GM23248 (cell line): ENCODE measurements at regions of chrX and their contacts with region 1.

Region 1: DNA sequence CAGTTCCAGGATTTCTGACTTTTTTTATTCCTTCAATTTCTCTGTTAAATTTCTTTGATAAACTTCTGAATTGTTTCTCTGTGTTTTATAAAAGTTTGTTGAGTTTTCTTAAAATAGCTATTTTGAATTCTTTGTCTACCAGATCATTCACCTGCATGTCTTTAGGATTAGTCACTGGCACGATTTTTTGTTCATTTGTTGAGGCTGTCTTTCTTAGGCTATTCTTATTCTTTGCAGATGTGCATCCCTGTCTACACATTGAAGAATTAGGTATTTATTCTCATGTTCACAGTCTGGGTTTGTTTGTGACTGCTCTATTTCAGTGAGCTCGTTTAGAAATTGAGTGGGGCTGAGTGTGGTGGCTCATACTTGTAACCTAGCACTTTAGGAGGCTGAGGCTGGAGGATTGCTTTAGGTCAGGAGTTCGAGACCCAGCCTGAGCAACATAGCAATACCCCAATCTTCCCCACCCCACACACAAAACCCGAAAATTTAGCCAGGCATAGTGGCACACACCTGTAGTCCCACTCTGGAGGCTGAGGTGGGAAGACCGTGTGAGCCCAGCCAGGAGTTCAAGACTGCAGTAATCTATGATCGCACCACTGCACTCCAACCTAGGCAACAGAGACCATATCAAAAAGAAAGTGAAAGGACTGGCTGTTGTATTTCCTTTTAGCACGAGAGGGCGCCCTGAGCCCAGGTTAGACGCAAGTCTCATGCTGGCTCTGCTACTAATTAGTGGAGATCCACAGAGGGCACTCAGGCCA is 42.0 kb downstream of the F8 start:
- DNase-seq: peak; percentile 74
- H3K4me3 ChIP-seq: peak overlapping the region; percentile 73
- H3K27ac ChIP-seq: no peak overlapping the region
- H3K4me1 ChIP-seq: peaks cover 3% of the 10 kb centered on the region; the same call in 1 of the 2 replicates
- H3K27me3 ChIP-seq: no peaks in the 10 kb centered on the region

Region 2: DNA sequence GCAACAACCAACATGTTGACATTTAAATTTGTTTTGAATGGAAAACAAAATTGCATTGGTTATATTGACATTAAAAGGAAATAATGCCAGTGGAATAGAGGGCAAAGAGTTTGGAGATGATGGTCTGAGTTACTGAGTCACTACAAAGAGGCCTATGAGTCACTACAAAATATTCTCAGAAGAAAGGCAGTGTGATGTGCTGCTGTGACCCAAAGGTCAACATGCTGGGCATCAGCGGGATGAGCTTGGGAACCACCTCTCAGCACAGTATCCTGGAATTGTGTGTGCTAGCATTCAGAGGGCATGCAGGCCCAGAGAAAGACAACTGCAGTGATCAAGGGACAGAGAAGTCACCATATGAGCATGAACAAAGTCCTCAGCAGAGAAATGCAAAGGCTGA is 87.7 kb after region 1 on chrX:
- in situ Hi-C with region 1: loop called (anchors 10 kb)
- DNase-seq: peak; percentile 80
- H3K4me3 ChIP-seq: no peak overlapping the region
- H3K27ac ChIP-seq: peak overlapping the region; percentile 76
- H3K4me1 ChIP-seq: peaks cover 38% of the 10 kb centered on the region
- H3K27me3 ChIP-seq: no peaks in the 10 kb centered on the region